Transverse colon (tissue), 4 donors: ENCODE measurements at regions of chr10 and their contacts with region 1.

Region 1: DNA sequence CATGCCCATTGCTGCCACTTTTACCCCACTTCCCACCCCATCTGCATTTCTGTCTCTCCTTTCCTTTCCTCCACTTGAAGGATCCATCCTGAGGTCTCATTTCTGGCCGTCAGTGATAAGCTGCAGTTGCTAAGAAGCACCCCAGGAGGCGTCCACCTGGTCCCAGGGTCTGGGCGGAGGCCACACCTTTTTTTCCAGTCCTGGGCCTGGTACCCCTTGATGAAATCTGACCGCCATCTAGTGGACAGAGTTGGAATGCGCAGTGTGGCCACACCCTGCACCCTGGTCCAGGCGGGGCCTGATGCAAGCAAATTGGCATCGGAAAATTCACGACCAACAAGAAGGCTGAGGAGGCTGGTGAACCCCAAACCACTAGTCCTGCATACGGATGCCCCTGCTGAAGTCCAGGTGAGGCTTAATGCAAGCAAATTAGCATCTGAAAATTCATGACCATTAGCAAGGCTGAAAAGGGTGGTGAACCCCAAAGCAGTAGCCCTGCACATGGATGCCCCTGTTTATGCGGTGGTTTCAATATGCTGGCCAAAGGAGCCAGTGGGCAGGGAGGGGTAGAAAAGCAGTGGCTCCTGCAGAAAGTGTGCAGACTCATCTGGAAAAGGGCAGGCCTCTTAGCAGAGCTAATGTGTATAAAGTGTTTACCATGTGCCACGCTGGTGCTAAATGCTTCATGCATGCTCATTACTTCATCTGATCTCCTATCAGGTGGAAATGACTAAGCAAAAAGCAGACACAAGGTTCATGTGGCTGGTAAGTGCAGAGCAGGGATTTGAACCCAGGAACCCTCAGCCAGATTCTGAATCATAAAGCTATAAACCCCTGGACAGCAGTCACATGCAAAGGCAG is 43.2 kb downstream of the GPAM start:
- DNase-seq: peak; percentile 73
- H3K4me3 ChIP-seq: no peak overlapping the region
- H3K27ac ChIP-seq: no peak overlapping the region
- H3K4me1 ChIP-seq: no peaks in the 10 kb centered on the region
- H3K27me3 ChIP-seq: no peaks in the 10 kb centered on the region
- CTCF ChIP-seq: peak; percentile 69 to 85 (median 78)
- EP300 ChIP-seq: no peak
- POLR2A ChIP-seq: no peak

Region 2: GRCh38 chr10:110610308-110610774 is 1530.0 kb before region 1 on chr10:
- in situ Hi-C with region 1: loop called in 1 of 4 experiments (anchors 25 kb)
- intact Hi-C with region 1: no loop called
- DNase-seq: peak; percentile 45
- H3K4me3 ChIP-seq: no peak overlapping the region
- H3K27ac ChIP-seq: no peak overlapping the region
- H3K4me1 ChIP-seq: no peaks in the 10 kb centered on the region
- H3K27me3 ChIP-seq: no peaks in the 10 kb centered on the region
- CTCF ChIP-seq: peak; percentile 69 to 83 (median 78)
- EP300 ChIP-seq: no peak
- POLR2A ChIP-seq: no peak

Region 3: GRCh38 chr10:111756217-111757061 is 383.9 kb before region 1 on chr10:
- in situ Hi-C with region 1: loop called in 3 of 4 experiments (anchors 25 kb)
- intact Hi-C with region 1: loop called (anchors 5 kb)
- DNase-seq: peak; percentile 15
- H3K4me3 ChIP-seq: no peak overlapping the region
- H3K27ac ChIP-seq: no peak overlapping the region
- H3K4me1 ChIP-seq: no peaks in the 10 kb centered on the region
- H3K27me3 ChIP-seq: no peaks in the 10 kb centered on the region
- CTCF ChIP-seq: peak in 4 of 5 experiments; percentile 18 to 32 (median 26)
- EP300 ChIP-seq: no peak
- POLR2A ChIP-seq: no peak

Region 4: GRCh38 chr10:112613620-112614019 is 473.3 kb after region 1 on chr10:
- in situ Hi-C with region 1: no loop called
- intact Hi-C with region 1: no loop called
- DNase-seq: no peak
- H3K4me3 ChIP-seq: no peak overlapping the region
- H3K27ac ChIP-seq: no peak overlapping the region
- H3K4me1 ChIP-seq: no peaks in the 10 kb centered on the region
- H3K27me3 ChIP-seq: no peaks in the 10 kb centered on the region
- CTCF ChIP-seq: no peak
- EP300 ChIP-seq: no peak
- POLR2A ChIP-seq: no peak